ENCODE measurements at regions of chr2 and their contacts with region 1.

Region 1: DNA sequence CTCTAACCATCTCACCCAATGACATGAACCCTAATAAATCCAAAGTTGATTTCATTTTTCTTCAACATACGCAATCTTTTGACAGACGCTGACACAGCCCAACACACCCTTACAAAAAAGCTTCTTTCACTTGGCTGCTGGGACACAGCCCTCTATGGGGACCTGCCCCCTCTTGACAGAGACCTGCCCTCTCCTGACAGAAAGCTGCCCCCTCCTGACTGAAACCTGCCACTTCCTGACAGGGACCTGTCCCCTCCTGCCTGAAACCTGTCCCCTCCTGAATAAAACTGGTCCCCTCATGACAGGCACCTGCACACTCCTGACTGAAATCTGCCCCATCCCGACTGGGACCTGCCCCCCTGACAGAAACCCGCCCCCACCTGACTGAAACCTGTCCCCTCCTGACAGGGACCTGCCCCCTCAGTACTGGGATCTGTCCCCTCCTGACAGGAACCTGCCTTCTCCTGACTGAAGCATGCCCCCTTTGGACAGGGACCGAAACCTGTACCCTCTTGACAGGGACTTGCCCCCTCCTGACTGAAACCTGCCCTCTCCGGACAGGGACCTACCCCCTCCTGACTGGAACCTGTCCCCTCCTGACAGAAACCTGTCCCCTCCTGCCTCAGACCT is 87.9 kb downstream of the PXDN start:
- DNase-seq: peak; percentile 34 to 40
- H3K4me3 ChIP-seq: no peak overlapping the region
- H3K4me3 Mint-ChIP-seq: no peak overlapping the region
- H3K27ac Mint-ChIP-seq: no peak overlapping the region
- H3K4me1 ChIP-seq: no peaks in the 10 kb centered on the region
- H3K4me1 Mint-ChIP-seq: no peaks in the 10 kb centered on the region
- H3K27me3 ChIP-seq: no peaks in the 10 kb centered on the region
- H3K27me3 Mint-ChIP-seq: peaks cover 7% of the 10 kb centered on the region
- CTCF ChIP-seq: peak; percentile 9 to 10

Region 2: GRCh38 chr2:1497122-1497611 is 159.3 kb before region 1 on chr2:
- CTCF ChIA-PET with region 1: no interaction called
- POLR2A ChIA-PET with region 1: no interaction called
- intact Hi-C with region 1: no loop called
- DNase-seq: peak in 1 of 2 experiments; percentile 26
- H3K4me3 ChIP-seq: no peak overlapping the region
- H3K4me3 Mint-ChIP-seq: no peak overlapping the region
- H3K27ac Mint-ChIP-seq: no peak overlapping the region
- H3K4me1 ChIP-seq: no peaks in the 10 kb centered on the region
- H3K4me1 Mint-ChIP-seq: no peaks in the 10 kb centered on the region
- H3K27me3 ChIP-seq: no peaks in the 10 kb centered on the region
- H3K27me3 Mint-ChIP-seq: peaks cover 25% of the 10 kb centered on the region
- CTCF ChIP-seq: no peak

Region 3: GRCh38 chr2:1553671-1554295 is 102.7 kb before region 1 on chr2:
- CTCF ChIA-PET with region 1: no interaction called
- POLR2A ChIA-PET with region 1: no interaction called
- intact Hi-C with region 1: loop called (anchors 1 kb)
- DNase-seq: peak; percentile 65 to 67
- H3K4me3 ChIP-seq: no peak overlapping the region
- H3K4me3 Mint-ChIP-seq: peak overlapping the region; percentile 41
- H3K27ac Mint-ChIP-seq: peak overlapping the region; percentile 85
- H3K4me1 ChIP-seq: peaks cover 42% of the 10 kb centered on the region
- H3K4me1 Mint-ChIP-seq: peaks cover 12% of the 10 kb centered on the region
- H3K27me3 ChIP-seq: no peaks in the 10 kb centered on the region
- H3K27me3 Mint-ChIP-seq: no peaks in the 10 kb centered on the region
- CTCF ChIP-seq: peak in 1 of 2 experiments; percentile 28

Region 4: DNA sequence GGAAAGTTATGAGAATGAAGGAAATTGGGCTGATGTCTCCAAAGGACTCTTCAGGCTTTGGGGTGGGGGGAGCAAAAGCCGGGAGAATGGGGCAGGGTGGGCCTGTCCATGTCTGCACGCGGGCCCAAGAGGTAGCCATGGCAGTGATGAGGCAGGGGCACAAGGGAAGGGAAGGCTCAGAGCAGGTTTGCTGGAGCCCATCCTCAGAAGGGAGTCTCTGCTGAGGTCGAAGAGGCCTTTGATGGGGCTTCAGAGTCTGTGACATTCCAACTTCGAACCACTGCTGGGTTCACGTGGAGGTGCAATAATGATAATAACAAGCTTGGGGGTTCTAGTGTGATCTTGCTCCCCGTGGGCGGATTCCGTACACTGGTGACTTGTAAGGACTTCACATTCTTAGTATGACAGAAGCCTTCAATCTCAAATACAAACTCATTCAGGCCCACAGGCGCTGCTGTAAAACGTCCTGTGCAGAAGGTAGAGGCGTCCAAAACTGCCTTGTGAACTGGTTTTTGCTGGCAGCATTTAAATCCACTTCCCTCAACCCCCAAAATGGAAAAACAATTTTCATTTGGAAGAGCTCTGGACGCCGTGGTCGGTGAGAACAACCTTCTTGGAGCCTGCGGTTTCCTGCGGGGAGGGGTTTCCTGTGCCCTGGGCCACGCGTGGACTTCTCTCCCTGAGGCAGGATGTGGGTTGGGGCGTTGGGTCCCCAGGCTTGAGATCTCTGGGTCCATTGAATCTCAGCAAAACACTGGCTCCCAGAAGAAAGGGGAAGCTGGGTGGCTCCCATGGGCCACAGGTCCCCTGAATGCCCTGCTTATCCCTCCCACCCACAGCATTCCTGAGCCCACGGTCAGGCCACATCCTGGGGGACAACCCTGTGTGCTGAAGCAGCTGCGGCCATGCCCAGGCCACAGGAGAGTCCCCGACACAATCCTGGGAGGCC is 92.2 kb before region 1 on chr2:
- CTCF ChIA-PET with region 1: no interaction called
- POLR2A ChIA-PET with region 1: no interaction called
- intact Hi-C with region 1: no loop called
- DNase-seq: no peak
- H3K4me3 ChIP-seq: no peak overlapping the region
- H3K4me3 Mint-ChIP-seq: no peak overlapping the region
- H3K27ac Mint-ChIP-seq: no peak overlapping the region
- H3K4me1 ChIP-seq: no peaks in the 10 kb centered on the region
- H3K4me1 Mint-ChIP-seq: no peaks in the 10 kb centered on the region
- H3K27me3 ChIP-seq: no peaks in the 10 kb centered on the region
- H3K27me3 Mint-ChIP-seq: no peaks in the 10 kb centered on the region
- CTCF ChIP-seq: no peak

Region 5: GRCh38 chr2:1731963-1732768 is 75.7 kb after region 1 on chr2:
- CTCF ChIA-PET with region 1: no interaction called
- POLR2A ChIA-PET with region 1: no interaction called
- intact Hi-C with region 1: no loop called
- DNase-seq: peak in 1 of 2 experiments; percentile 3
- H3K4me3 ChIP-seq: no peak overlapping the region
- H3K4me3 Mint-ChIP-seq: no peak overlapping the region
- H3K27ac Mint-ChIP-seq: no peak overlapping the region
- H3K4me1 ChIP-seq: peaks cover 14% of the 10 kb centered on the region
- H3K4me1 Mint-ChIP-seq: peaks cover 12% of the 10 kb centered on the region
- H3K27me3 ChIP-seq: no peaks in the 10 kb centered on the region
- H3K27me3 Mint-ChIP-seq: no peaks in the 10 kb centered on the region
- CTCF ChIP-seq: no peak

Region 6: DNA sequence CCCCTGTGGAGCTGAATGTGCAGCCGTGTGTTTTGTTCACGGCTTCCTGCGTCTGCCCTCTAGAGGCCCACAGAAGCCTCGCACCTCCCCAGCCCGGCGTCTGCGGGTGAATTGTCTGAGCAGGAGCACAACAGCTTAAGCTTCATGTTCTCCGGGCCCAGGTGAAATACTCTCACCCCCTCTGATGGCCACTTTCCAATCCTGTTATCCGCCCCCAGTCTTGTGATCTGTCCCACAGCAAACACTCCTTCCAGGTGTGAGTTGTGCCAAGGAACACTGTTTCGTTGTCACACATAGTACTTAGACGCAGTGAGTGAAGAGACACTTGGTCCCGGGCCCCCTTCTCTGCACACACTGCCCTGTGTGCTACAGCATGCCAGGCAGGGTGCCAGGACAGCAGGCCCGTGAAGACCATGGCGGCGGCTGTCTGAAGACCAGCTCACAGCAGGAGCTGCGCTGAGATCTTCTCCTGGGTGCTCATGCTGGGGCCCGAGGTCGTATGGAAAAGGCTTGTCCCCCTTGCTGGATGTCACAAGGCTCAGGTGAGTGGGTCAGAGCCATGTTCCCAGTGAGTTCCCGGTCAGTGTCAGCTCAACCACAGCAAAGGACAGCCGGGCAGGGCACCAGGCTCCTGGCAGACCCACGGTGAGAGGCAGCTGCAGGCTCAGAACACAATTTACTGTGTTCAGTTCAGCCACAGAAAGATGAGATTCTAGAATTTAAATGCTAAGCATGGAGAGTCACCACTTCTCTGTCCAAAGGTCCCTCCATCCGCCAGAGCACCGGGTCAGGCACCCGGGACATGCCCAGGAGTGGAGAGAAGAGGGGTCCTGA is 94.7 kb after region 1 on chr2:
- CTCF ChIA-PET with region 1: interaction called, 4 read pairs
- POLR2A ChIA-PET with region 1: no interaction called
- intact Hi-C with region 1: loop called (anchors 5 kb)
- DNase-seq: peak; percentile 55 to 67
- H3K4me3 ChIP-seq: no peak overlapping the region
- H3K4me3 Mint-ChIP-seq: no peak overlapping the region
- H3K27ac Mint-ChIP-seq: no peak overlapping the region
- H3K4me1 ChIP-seq: no peaks in the 10 kb centered on the region
- H3K4me1 Mint-ChIP-seq: no peaks in the 10 kb centered on the region
- H3K27me3 ChIP-seq: no peaks in the 10 kb centered on the region
- H3K27me3 Mint-ChIP-seq: peaks cover 6% of the 10 kb centered on the region
- CTCF ChIP-seq: peak; percentile 78 to 81